ENCODE measurements at regions of chr11 and their contacts with region 1.

Region 1: DNA sequence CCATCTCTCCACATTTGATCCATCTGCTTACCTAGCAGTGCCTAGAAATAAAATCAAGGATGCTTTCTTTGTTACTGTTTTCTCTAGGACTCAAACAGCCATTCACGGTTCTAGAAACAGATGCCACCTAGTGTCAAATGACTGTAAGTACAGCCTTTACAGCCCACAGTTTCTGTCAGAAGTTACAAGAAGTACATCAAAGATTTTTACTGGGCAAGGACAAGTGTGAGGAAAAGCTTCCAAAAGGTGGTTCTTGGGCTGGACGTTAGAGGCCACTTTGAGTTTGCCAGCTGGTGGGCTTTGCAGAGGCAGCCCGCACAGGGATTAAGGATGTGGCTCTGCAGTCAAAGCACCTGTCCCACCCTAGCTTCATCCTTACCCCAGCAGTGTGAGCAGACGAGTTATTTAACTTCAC is 6.9 kb downstream of the KMT5B start:
- DNase-seq: peak; percentile 73
- CTCF ChIP-seq: peak; percentile 78

Region 2: GRCh38 chr11:68071281-68072048 is 134.7 kb before region 1 on chr11:
- CTCF ChIA-PET with region 1: no interaction called
- POLR2A ChIA-PET with region 1: no interaction called
- DNase-seq: no peak
- CTCF ChIP-seq: no peak

Region 3: GRCh38 chr11:68153742-68154411 is 52.3 kb before region 1 on chr11:
- CTCF ChIA-PET with region 1: no interaction called
- POLR2A ChIA-PET with region 1: no interaction called
- DNase-seq: no peak
- CTCF ChIP-seq: no peak

Region 4: GRCh38 chr11:68191661-68192579 is 14.3 kb before region 1 on chr11:
- CTCF ChIA-PET with region 1: interaction called, 89 read pairs
- POLR2A ChIA-PET with region 1: no interaction called
- DNase-seq: no peak
- CTCF ChIP-seq: no peak

Region 5: DNA sequence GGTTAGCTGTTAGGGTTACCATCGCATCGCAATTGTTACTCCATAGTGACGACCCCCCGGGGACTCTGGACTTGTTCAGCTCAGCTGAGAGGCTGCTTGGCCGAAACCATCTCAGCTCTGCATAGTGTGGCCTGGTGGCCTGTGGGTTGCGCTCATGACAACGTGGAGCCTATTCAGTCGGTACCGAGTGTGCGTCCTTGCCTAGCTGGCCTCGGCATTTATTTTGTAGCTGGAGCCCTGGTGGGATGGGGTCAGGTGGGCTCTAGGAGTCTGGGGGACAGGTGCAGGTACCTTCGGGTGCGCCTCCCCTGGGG is 119.7 kb after region 1 on chr11:
- CTCF ChIA-PET with region 1: no interaction called
- POLR2A ChIA-PET with region 1: no interaction called
- DNase-seq: no peak
- CTCF ChIP-seq: no peak

Region 6: GRCh38 chr11:68358416-68358815 is 152.2 kb after region 1 on chr11:
- CTCF ChIA-PET with region 1: no interaction called
- POLR2A ChIA-PET with region 1: no interaction called
- DNase-seq: no peak
- CTCF ChIP-seq: no peak